ENCODE measurements at regions of chr6 and their contacts with region 1.

Region 1: DNA sequence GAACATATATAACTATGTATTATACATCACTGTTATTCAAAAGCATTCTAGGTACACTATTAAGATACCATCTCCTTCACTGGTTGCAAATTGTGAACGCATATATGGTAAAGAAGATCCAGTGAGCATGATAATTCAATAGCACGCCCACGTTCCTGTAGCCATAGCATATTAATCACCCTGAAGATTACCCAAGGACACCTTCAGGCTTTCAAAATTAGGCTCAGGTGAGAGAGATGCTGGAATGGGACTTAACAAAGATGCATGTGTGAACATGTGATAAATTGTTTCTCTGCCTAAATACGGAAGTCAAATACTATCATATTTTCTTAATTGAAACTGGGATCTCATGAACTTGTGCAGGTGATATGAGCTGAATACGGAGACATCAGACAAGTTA is 303.5 kb downstream of the PTPRK start:
- DNase-seq: no peak
- H3K4me3 ChIP-seq: no peak overlapping the region
- H3K4me3 Mint-ChIP-seq: no peak overlapping the region
- H3K27ac Mint-ChIP-seq: no peak overlapping the region
- H3K4me1 ChIP-seq: peaks cover 2% of the 10 kb centered on the region
- H3K4me1 Mint-ChIP-seq: peaks cover 4% of the 10 kb centered on the region
- H3K27me3 ChIP-seq: no peaks in the 10 kb centered on the region
- H3K27me3 Mint-ChIP-seq: no peaks in the 10 kb centered on the region
- CTCF ChIP-seq: no peak

Region 2: GRCh38 chr6:128202169-128202765 is 14.7 kb before region 1 on chr6:
- CTCF ChIA-PET with region 1: no interaction called
- POLR2A ChIA-PET with region 1: no interaction called
- intact Hi-C with region 1: no loop called
- DNase-seq: no peak
- H3K4me3 ChIP-seq: no peak overlapping the region
- H3K4me3 Mint-ChIP-seq: no peak overlapping the region
- H3K27ac Mint-ChIP-seq: no peak overlapping the region
- H3K4me1 ChIP-seq: peaks cover 15% of the 10 kb centered on the region
- H3K4me1 Mint-ChIP-seq: peaks cover 17% of the 10 kb centered on the region
- H3K27me3 ChIP-seq: no peaks in the 10 kb centered on the region
- H3K27me3 Mint-ChIP-seq: no peaks in the 10 kb centered on the region
- CTCF ChIP-seq: no peak

Region 3: GRCh38 chr6:128242765-128243403 is 26.0 kb after region 1 on chr6:
- CTCF ChIA-PET with region 1: no interaction called
- POLR2A ChIA-PET with region 1: no interaction called
- intact Hi-C with region 1: loop called (anchors 1 kb)
- DNase-seq: peak in 1 of 2 experiments; percentile 11
- H3K4me3 ChIP-seq: no peak overlapping the region
- H3K4me3 Mint-ChIP-seq: no peak overlapping the region
- H3K27ac Mint-ChIP-seq: peak overlapping the region; percentile 63
- H3K4me1 ChIP-seq: peaks cover 24% of the 10 kb centered on the region
- H3K4me1 Mint-ChIP-seq: peaks cover 15% of the 10 kb centered on the region
- H3K27me3 ChIP-seq: no peaks in the 10 kb centered on the region
- H3K27me3 Mint-ChIP-seq: no peaks in the 10 kb centered on the region
- CTCF ChIP-seq: no peak

Region 4: DNA sequence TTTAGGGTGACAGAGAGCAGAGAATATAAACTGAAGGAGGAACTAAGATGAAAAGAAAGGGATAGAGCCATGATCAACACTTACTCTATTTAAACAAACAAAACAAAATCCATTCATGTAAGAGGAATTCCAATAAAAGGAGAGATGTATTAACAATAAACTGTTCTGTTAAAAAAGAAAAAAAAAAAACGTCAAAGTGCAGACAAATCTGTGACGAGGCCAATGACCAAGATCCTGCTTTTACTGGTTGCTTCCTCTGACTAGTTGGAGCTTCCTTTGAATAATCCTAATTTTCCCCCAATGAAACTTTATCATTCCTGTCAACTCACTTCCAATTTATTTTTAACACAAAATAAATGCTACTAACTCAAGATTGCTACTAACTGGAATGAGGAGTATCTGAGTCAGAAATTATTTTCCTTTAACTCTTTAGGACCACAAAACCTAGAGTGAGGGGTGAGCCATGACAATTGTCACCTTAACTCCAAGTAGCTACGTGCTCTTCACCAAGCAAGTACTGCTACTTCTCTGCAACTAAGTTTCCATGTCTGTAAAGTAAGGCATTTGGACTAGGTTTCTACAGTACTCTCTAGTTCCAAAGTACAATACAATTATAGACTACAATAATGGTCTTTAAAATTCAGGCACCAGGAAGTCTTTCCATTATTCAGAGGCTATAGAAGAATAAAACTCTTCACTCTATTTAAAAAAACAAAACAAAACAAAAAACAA is 151.5 kb after region 1 on chr6:
- CTCF ChIA-PET with region 1: no interaction called
- POLR2A ChIA-PET with region 1: no interaction called
- intact Hi-C with region 1: loop called (anchors 5 kb)
- DNase-seq: no peak
- H3K4me3 ChIP-seq: no peak overlapping the region
- H3K4me3 Mint-ChIP-seq: peak overlapping the region; percentile 35
- H3K27ac Mint-ChIP-seq: peak overlapping the region; percentile 45
- H3K4me1 ChIP-seq: peaks cover 62% of the 10 kb centered on the region
- H3K4me1 Mint-ChIP-seq: peaks cover 61% of the 10 kb centered on the region
- H3K27me3 ChIP-seq: no peaks in the 10 kb centered on the region
- H3K27me3 Mint-ChIP-seq: no peaks in the 10 kb centered on the region
- CTCF ChIP-seq: no peak

Measured in Caco-2 (cell line).